GM12878 (cell line): ENCODE measurements at regions of chr1 and their contacts with region 1.

Region 1: GRCh38 chr1:160342953-160343869 is at the starts of genes COPA and NCSTN:
- DNase-seq: peak; percentile 75
- ATAC-seq: peak; percentile 90
- H3K4me3 ChIP-seq: peak within 1 kb of the TSS; percentile 96
- H3K27ac ChIP-seq: peak within 1 kb of the TSS; percentile 97
- H3K4me1 ChIP-seq: peaks cover 23% of the 10 kb centered on the region
- H3K27me3 ChIP-seq: no peaks in the 10 kb centered on the region
- CTCF ChIP-seq: no peak
- EP300 ChIP-seq: no peak
- POLR2A ChIP-seq: peak; percentile 96
- RAD21 ChIP-seq: no peak
- polyA plus RNA-seq, gene COPA: 53.7 to 70.6 TPM
- polyA plus RNA-seq, gene NCSTN: 33.3 to 41.6 TPM

Region 2: GRCh38 chr1:159040206-159040605 is 1303.0 kb before region 1 on chr1:
- CTCF ChIA-PET with region 1: no interaction called
- POLR2A ChIA-PET with region 1: no interaction called
- RAD21 ChIA-PET with region 1: no interaction called
- SMC1A ChIA-PET with region 1: no interaction called
- in situ Hi-C with region 1: loop called (anchors 25 kb)
- intact Hi-C with region 1: no loop called
- DNase-seq: no peak
- ATAC-seq: no peak
- H3K4me3 ChIP-seq: no peak overlapping the region
- H3K27ac ChIP-seq: no peak overlapping the region
- H3K4me1 ChIP-seq: no peaks in the 10 kb centered on the region
- H3K27me3 ChIP-seq: no peaks in the 10 kb centered on the region
- CTCF ChIP-seq: no peak
- EP300 ChIP-seq: no peak
- POLR2A ChIP-seq: no peak
- RAD21 ChIP-seq: no peak

Region 3: DNA sequence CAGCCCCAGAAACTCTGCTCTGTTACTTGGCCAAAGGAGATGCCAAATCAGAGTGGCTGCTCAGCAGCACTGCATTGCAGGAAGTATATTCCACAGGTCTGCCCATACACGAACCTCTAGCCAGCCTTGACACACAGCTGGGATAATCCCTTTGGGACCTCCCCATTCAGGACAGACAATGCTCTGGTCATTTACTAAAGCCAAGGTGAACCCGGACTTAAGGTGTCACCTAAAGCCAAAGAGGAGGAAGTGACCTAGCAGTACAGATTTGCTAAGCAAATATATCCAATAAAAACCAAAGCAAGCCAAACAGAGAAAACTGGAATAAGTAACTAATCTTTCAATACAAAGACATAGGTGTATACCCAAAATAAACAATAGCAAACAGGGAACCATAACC is 27.9 kb before region 1 on chr1:
- CTCF ChIA-PET with region 1: no interaction called
- POLR2A ChIA-PET with region 1: no interaction called
- RAD21 ChIA-PET with region 1: no interaction called
- SMC1A ChIA-PET with region 1: no interaction called
- in situ Hi-C with region 1: no loop called
- intact Hi-C with region 1: no loop called
- DNase-seq: no peak
- ATAC-seq: no peak
- H3K4me3 ChIP-seq: no peak overlapping the region
- H3K27ac ChIP-seq: no peak overlapping the region
- H3K4me1 ChIP-seq: no peaks in the 10 kb centered on the region
- H3K27me3 ChIP-seq: no peaks in the 10 kb centered on the region
- CTCF ChIP-seq: no peak
- EP300 ChIP-seq: no peak
- POLR2A ChIP-seq: no peak
- RAD21 ChIP-seq: no peak

Region 4: GRCh38 chr1:160332516-160332915 is 10.7 kb before region 1 on chr1:
- CTCF ChIA-PET with region 1: interaction called, 6 read pairs
- POLR2A ChIA-PET with region 1: interaction called, 25 read pairs
- RAD21 ChIA-PET with region 1: no interaction called
- SMC1A ChIA-PET with region 1: interaction called, 6 read pairs
- in situ Hi-C with region 1: no loop called
- intact Hi-C with region 1: no loop called
- DNase-seq: no peak
- ATAC-seq: no peak
- H3K4me3 ChIP-seq: no peak overlapping the region
- H3K27ac ChIP-seq: no peak overlapping the region
- H3K4me1 ChIP-seq: no peaks in the 10 kb centered on the region
- H3K27me3 ChIP-seq: no peaks in the 10 kb centered on the region
- CTCF ChIP-seq: no peak
- EP300 ChIP-seq: no peak
- POLR2A ChIP-seq: no peak
- RAD21 ChIP-seq: no peak

Region 5: DNA sequence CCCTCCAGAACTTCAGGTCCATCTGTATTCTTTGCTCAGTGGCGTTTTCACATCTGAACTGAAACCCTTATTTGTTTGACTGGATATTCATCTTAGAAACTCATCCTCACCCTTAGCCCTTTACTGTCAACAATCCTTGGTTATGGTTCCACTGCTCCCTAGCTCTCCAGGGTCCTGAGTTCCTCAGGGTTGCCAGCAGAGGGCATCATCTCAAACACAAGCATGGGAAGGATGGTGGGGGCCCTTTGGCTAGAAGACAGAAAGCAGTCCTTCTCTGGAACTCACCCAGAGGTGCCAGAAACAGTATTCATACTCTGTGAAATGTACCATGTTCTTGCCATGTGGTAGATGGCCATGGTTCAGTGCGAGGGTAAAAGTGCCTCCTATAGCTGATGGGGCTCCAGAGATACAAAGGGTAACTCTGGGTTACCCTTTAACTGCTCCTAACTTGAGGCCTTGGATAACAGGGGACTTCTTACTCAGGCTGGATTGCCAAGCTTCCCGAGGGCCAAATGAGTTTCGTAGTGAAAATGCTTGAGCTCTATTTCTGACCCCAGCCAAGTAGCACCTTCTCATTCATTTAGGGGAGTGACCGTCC is 11.3 kb after region 1 on chr1:
- CTCF ChIA-PET with region 1: interaction called, 10 read pairs
- POLR2A ChIA-PET with region 1: interaction called, 8 read pairs
- RAD21 ChIA-PET with region 1: no interaction called
- SMC1A ChIA-PET with region 1: interaction called, 5 read pairs
- in situ Hi-C with region 1: no loop called
- intact Hi-C with region 1: no loop called
- DNase-seq: no peak
- ATAC-seq: peak; percentile 82
- H3K4me3 ChIP-seq: no peak overlapping the region
- H3K27ac ChIP-seq: no peak overlapping the region
- H3K4me1 ChIP-seq: no peaks in the 10 kb centered on the region
- H3K27me3 ChIP-seq: no peaks in the 10 kb centered on the region
- CTCF ChIP-seq: peak; percentile 29 to 55 (median 55)
- EP300 ChIP-seq: no peak
- POLR2A ChIP-seq: no peak
- RAD21 ChIP-seq: peak; percentile 38; the same call in 1 of the 2 replicates